Activated CD4-positive, alpha-beta T cell treated with anti-CD3 and anti-CD28 coated beads for 36 hours (primary cell): ENCODE measurements at regions of chr1 and their contacts with region 1.

Region 1: GRCh38 chr1:76269155-76269554 is 194.6 kb downstream of the ST6GALNAC3 start:
- DNase-seq: no peak
- ATAC-seq: peak; percentile 70
- H3K4me3 Mint-ChIP-seq: no peak overlapping the region
- H3K27ac Mint-ChIP-seq: peak overlapping the region; percentile 69
- H3K4me1 Mint-ChIP-seq: peaks cover 51% of the 10 kb centered on the region
- H3K27me3 Mint-ChIP-seq: no peaks in the 10 kb centered on the region

Region 2: GRCh38 chr1:76219366-76219818 is 49.8 kb before region 1 on chr1:
- CTCF ChIA-PET with region 1: no interaction called
- POLR2A ChIA-PET with region 1: no interaction called
- intact Hi-C with region 1: no loop called
- DNase-seq: peak; percentile 28
- ATAC-seq: peak; percentile 81
- H3K4me3 Mint-ChIP-seq: no peak overlapping the region
- H3K27ac Mint-ChIP-seq: no peak overlapping the region
- H3K4me1 Mint-ChIP-seq: peaks cover 8% of the 10 kb centered on the region
- H3K27me3 Mint-ChIP-seq: no peaks in the 10 kb centered on the region

Region 3: GRCh38 chr1:76254104-76255030 is 14.8 kb before region 1 on chr1:
- CTCF ChIA-PET with region 1: interaction called, 4 read pairs
- POLR2A ChIA-PET with region 1: no interaction called
- intact Hi-C with region 1: loop called (anchors 1 to 2 kb)
- DNase-seq: peak; percentile 47
- ATAC-seq: peak; percentile 52
- H3K4me3 Mint-ChIP-seq: no peak overlapping the region
- H3K27ac Mint-ChIP-seq: peak overlapping the region; percentile 44
- H3K4me1 Mint-ChIP-seq: peaks cover 57% of the 10 kb centered on the region
- H3K27me3 Mint-ChIP-seq: no peaks in the 10 kb centered on the region

Region 4: DNA sequence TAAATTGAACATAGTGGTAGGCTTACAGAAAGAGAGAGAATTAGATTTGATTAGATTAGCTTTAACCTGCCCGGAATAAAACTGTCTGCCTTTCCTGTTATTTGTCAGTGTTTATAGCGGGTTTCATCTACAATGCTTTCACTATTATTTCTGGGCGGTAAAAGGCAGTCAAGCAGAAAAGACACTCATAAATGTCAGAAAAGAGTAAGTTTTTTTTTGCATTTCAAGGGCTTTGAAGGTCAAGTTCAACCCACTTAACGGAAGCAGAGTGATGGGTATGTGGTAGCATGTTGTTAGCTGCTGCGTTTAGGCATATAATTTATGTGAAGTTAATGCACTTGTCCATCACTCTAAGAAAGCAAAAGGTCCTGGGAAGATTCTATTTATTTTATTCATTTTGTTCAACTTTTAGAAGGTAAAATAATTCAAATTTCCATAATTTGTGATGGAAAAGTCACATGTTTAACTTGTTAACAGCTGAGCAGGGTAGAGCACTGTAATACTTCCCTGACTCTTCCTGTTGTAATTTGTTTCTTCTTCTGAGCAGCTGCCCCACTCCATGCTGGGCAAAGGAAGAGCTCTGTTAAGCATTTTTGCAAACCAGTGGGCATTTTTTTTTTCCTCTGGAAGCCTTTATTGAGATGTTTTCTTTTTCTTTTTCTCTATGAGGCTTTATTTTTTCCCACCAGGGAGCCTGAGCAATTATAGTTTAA is 25.5 kb after region 1 on chr1:
- CTCF ChIA-PET with region 1: interaction called, 4 read pairs
- POLR2A ChIA-PET with region 1: no interaction called
- intact Hi-C with region 1: loop called in 1 of 2 experiments (anchors 2 kb)
- DNase-seq: no peak
- ATAC-seq: peak; percentile 68
- H3K4me3 Mint-ChIP-seq: peak overlapping the region; percentile 11
- H3K27ac Mint-ChIP-seq: peak overlapping the region; percentile 86
- H3K4me1 Mint-ChIP-seq: peaks cover 66% of the 10 kb centered on the region
- H3K27me3 Mint-ChIP-seq: no peaks in the 10 kb centered on the region